A549 (cell line): ENCODE measurements at regions of chrX and their contacts with region 1.

Region 1: GRCh38 chrX:153947009-153947769 is 2.7 kb upstream of the RENBP start:
- DNase-seq: peak; percentile 72 to 87
- ATAC-seq: peak; percentile 83 to 91
- H3K4me3 ChIP-seq: no peak overlapping the region
- H3K27ac ChIP-seq: peak overlapping the region in 1 of 2 experiments; percentile 68; a peak in 2 of 6 replicates
- H3K4me1 ChIP-seq: peaks cover 3% of the 10 kb centered on the region; the same call in 1 of the 3 replicates
- CTCF ChIP-seq: peak; percentile 92
- EP300 ChIP-seq: no peak
- POLR2A ChIP-seq: no peak
- RAD21 ChIP-seq: peak; percentile 59 to 61

Region 2: GRCh38 chrX:152941328-152942106 is 1005.7 kb before region 1 on chrX:
- CTCF ChIA-PET with region 1: interaction called, 12 read pairs
- POLR2A ChIA-PET with region 1: no interaction called
- DNase-seq: peak; percentile 85 to 94
- ATAC-seq: peak; percentile 90 to 96
- H3K4me3 ChIP-seq: peak overlapping the region; percentile 62
- H3K27ac ChIP-seq: peak overlapping the region; percentile 85 to 96
- H3K4me1 ChIP-seq: peaks cover 8% of the 10 kb centered on the region; the same call in 1 of the 3 replicates
- CTCF ChIP-seq: peak; percentile 77
- EP300 ChIP-seq: no peak
- POLR2A ChIP-seq: peak; percentile 57
- RAD21 ChIP-seq: peak; percentile 76 to 95

Region 3: DNA sequence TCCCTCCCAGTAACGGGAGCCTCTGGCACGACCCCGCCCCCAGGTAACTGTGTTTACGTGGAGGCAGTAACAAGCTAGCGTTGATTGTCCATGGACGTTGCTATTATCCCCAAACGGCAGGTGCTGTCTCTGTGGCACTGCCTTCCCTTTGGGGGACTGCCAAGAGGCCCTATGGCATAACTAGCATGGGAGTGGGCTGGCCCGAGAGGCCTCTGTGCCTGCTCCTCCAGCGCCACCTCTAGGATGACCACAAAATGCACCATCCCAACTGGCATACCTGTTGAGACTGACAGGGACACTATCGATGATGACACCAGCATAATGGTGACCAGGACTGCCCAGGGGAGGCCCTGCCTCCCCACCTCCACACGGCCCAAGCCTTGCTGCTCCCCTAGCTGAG is 164.9 kb before region 1 on chrX:
- CTCF ChIA-PET with region 1: interaction called, 14 read pairs
- POLR2A ChIA-PET with region 1: no interaction called
- DNase-seq: no peak
- ATAC-seq: peak in 1 of 2 experiments; percentile 11; a peak in 3 of 6 replicates
- H3K4me3 ChIP-seq: no peak overlapping the region
- H3K27ac ChIP-seq: no peak overlapping the region
- H3K4me1 ChIP-seq: no peaks in the 10 kb centered on the region
- CTCF ChIP-seq: no peak
- EP300 ChIP-seq: no peak
- POLR2A ChIP-seq: no peak
- RAD21 ChIP-seq: no peak

Region 4: DNA sequence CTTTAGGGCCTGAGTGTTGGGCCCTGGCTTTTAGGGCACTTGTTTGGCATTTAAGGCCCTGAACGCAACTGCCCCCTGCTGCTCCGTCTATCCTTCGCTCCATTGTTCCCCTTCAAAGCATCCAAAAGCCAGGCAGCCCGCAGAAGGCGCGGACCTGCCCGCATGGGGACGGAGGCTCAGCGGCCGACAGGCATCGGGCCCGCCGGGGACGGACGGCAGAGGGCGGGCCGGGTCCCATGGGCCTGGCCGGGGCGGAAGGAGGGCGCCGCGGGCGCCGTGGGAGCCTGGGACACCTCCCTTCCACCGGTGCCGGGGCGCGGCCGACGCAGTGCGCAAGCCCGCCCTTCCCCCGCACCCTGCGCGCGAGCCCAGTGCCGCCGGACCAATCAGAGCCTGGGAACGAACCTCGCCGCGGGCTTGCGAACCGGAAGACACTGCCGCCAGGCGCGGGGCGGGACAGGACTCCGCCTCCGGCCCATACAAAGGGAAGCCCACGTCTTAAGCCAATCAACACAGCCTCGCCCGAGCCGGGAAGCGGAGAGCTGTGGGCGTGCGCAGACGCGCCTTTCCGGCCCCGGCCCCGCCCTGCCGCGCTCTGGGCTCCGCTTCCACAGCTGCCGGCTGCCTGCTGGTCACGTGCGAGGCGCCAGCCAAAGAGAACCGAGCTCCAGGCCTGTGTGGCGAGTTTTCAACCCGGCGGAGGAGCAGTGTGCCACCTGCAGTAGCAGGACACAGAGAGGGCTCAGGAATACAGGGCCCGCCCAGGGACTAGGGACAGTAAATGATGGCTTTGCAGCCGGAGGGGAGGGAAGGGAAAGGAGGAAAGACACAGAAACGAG is 19.0 kb before region 1 on chrX:
- CTCF ChIA-PET with region 1: interaction called, 363 read pairs
- POLR2A ChIA-PET with region 1: interaction called, 7 read pairs
- DNase-seq: peak; percentile 98 to 99
- ATAC-seq: peak; percentile 88 to 95
- H3K4me3 ChIP-seq: peak overlapping the region; percentile 84
- H3K27ac ChIP-seq: peak overlapping the region; percentile 96 to 99
- H3K4me1 ChIP-seq: peaks cover 17% of the 10 kb centered on the region
- CTCF ChIP-seq: peak; percentile 26
- EP300 ChIP-seq: no peak
- POLR2A ChIP-seq: peak; percentile 50
- RAD21 ChIP-seq: no peak

Region 5: DNA sequence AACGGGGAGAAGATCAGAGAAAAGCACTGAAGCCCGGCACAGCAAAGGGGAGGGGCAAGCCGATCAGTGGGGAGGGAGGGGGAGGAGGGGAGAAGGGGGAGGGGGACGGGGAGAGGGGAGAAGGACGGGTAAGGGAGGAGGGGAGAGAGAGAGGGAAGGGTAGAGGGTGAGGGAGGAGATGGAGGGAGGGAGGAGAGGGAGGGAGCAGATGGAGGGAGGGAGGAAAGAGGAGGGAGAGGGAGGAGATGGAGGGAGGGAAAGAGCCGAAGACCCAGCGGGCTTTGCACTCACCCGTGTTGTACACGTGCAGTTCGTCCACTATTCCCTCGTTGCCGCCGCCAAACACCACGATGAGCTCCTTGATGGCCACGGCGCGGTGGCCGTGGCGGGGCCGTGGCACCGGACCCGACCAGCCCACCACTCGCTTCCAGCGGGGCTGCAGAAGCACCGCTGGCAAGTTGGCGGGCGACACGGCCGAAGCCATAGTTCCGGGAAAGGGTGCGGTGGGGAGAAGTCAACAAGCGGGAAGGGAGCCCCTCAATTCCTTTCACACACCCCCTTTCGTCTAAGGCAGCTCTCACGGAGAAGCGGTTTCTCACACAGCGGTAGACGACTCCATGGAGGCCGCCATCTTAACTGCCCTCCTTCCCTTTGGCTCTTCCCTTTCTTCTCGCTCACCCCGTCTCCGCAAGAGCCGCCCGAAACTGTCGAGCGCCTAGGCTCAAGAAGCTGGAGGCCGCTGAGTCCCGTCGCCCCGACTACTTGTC is 23.4 kb after region 1 on chrX:
- CTCF ChIA-PET with region 1: interaction called, 47 read pairs
- POLR2A ChIA-PET with region 1: no interaction called
- DNase-seq: peak in 1 of 2 experiments; percentile 76
- ATAC-seq: peak in 1 of 2 experiments; percentile 49; a peak in 3 of 6 replicates
- H3K4me3 ChIP-seq: peak overlapping the region; percentile 100
- H3K27ac ChIP-seq: peak overlapping the region; percentile 99 to 100
- H3K4me1 ChIP-seq: peaks cover 35% of the 10 kb centered on the region
- CTCF ChIP-seq: no peak
- EP300 ChIP-seq: no peak
- POLR2A ChIP-seq: peak; percentile 12; the same call in 1 of the 2 replicates
- RAD21 ChIP-seq: no peak